Gastrocnemius medialis (tissue), 4 donors: ENCODE measurements at regions of chr9 and their contacts with region 1.

Region 1: DNA sequence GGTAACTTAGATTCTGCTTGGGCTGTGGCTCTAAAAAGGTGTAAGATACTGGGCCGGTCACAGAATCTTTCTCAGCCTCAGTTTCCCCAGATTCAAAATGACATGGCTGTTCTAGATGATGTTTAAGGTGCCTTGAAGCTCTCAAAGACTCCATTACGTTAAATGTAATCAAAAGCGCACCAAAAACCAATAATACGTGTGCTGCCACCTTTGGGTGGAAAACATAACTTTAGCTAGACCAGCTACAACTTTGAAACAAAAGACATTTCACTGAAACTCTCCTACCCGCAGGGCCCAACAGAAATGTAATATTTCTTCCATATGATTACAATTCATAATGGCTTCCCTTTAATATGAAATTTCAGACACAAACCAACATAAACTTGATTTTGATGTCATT is 35.0 kb upstream of the PCSK5 start:
- DNase-seq: no peak
- ATAC-seq: no peak
- H3K4me3 ChIP-seq: no peak overlapping the region
- H3K27ac ChIP-seq: no peak overlapping the region
- H3K4me1 ChIP-seq: no peaks in the 10 kb centered on the region
- H3K27me3 ChIP-seq: no peaks in the 10 kb centered on the region
- CTCF ChIP-seq: peak in 1 of 5 experiments; percentile 31
- POLR2A ChIP-seq: no peak

Region 2: DNA sequence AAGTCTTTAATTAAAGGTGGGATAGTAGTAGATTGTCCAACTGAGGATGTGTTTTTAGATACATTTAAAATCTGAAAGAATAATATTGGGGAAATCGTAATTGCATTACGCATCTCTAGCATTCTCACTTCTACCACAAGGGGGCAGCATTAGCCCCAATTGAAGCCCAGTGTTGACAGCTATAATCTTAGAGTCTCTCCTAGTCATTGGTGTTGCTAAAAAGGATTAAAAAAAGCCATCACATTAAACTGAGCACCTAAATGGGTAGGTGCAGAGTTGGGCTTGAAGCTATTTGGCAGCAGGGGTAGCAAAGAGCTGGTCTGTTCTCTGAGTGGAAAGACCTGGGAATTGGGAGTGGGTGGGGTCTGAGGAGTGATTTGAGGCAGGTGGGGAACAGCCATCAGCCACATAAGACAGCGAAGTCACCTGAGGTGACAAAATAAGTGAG is 590.0 kb before region 1 on chr9:
- in situ Hi-C with region 1: loop called in 1 of 4 experiments (anchors 10 kb)
- intact Hi-C with region 1: no loop called
- DNase-seq: no peak
- ATAC-seq: no peak
- H3K4me3 ChIP-seq: no peak overlapping the region
- H3K27ac ChIP-seq: no peak overlapping the region
- H3K4me1 ChIP-seq: peaks cover 0 to 4% of the 10 kb centered on the region in 2 donors
- H3K27me3 ChIP-seq: no peaks in the 10 kb centered on the region
- CTCF ChIP-seq: peak; percentile 41 to 79 (median 63)
- POLR2A ChIP-seq: no peak

Region 3: GRCh38 chr9:75333624-75334023 is 521.9 kb before region 1 on chr9:
- in situ Hi-C with region 1: loop called in 2 of 4 experiments (anchors 10 kb)
- intact Hi-C with region 1: loop called (anchors 10 kb)
- DNase-seq: no peak
- ATAC-seq: no peak
- H3K4me3 ChIP-seq: no peak overlapping the region
- H3K27ac ChIP-seq: no peak overlapping the region
- H3K4me1 ChIP-seq: no peaks in the 10 kb centered on the region
- H3K27me3 ChIP-seq: peaks cover 0 to 3% (median 0%) of the 10 kb centered on the region in 3 donors
- CTCF ChIP-seq: peak in 4 of 5 experiments; percentile 9 to 23 (median 20)
- POLR2A ChIP-seq: no peak